Left cardiac atrium (tissue), 4 donors: ENCODE measurements at regions of chr12 and their contacts with region 1.

Region 1: DNA sequence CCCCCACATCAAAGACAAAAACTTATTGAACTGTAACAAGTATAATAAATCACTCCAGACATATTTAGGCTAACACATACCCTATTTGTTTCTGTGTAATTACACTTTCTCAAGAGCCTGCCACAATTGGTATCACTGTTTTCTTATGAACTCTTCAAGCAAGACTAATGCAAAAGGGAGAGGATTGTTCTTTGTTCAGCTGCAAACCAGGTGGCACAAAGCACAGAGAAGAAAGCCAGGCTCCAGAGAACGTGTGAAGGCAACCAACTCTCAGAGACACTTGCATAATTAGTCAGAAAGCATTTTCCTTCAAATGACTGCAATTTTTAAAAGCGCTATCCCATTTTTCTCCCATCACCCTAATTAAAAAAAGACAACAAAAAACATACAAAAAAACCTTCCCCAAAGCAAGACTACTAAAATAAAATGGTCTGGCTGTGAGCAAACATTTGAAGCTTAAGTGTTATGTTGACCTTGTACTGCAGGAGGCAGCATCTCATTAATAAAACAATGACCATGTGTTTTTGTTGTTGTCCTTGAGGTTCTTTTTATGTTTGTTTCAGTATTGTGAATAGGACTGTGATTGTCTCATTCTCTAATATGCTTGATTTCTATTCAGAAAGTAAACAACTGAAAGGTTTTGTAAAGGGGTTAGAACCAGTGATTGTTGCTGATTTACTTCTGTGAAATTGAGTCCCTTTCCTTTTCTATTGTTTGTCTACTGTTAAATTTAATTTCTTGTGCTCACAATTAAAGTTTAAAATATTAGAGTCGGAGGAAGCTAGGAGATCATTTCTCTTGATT is 452.7 kb upstream of the PDE3A start:
- DNase-seq: no peak
- ATAC-seq: peak; percentile 61 to 68

Region 2: GRCh38 chr12:19771858-19772257 is 143.7 kb before region 1 on chr12:
- intact Hi-C with region 1: no loop called
- DNase-seq: no peak
- ATAC-seq: peak; percentile 65 to 77

Region 3: GRCh38 chr12:19994970-19995369 is 79.4 kb after region 1 on chr12:
- intact Hi-C with region 1: loop called in 1 of 2 experiments (anchors 5 kb)
- DNase-seq: no peak
- ATAC-seq: no peak

Region 4: DNA sequence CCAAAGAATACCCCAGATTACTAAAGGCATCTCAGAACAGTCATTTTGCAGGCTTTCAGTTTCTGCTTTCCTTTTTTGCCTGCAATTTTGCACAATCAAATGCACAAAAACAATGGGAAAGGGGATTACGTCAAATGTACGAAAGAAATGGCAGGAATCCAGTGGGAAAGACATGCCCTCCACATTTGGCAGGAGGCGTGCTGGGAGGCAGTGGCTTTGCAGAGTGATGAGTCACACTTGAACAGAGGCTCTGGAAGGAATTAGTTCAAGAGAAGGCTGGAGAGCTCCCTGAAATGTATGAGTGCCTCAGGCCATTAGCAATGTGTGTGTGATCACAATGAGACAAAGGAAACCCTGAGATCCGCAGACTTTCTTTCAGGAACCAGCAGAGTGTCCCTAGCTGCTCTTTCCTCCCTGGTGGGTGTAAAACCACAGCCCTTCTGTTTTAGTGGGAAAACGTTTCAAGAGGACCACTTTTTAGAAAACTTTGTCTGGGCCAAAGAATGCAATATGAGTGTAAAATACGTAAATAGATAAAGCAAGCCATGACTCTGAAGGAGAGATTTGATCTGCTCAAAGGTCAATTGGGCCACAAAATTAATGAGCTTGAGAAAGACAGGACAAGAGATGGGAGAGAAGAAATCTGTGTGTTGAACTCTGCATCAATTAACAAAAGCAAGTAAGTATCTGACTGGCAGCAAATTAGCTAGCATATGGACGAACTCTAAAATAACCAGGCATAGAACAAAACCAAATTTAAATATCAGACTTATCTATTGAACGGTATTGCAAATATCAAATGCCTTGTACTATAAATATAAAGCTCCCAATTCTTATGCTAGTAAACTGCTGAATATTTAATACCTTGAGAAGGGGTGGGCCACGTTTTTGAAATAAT is 297.3 kb after region 1 on chr12:
- intact Hi-C with region 1: loop called in 1 of 2 experiments (anchors 10 kb)
- DNase-seq: peak; percentile 89
- ATAC-seq: peak; percentile 98 to 99